Activated naive CD8-positive, alpha-beta T cell treated with anti-CD3 and anti-CD28 coated beads, Interleukin-2, amount 10 ng/mL, durations not matched to agents 7 days and 5 days (primary cell): ENCODE measurements at regions of chr9 and their contacts with region 1.

Region 1: DNA sequence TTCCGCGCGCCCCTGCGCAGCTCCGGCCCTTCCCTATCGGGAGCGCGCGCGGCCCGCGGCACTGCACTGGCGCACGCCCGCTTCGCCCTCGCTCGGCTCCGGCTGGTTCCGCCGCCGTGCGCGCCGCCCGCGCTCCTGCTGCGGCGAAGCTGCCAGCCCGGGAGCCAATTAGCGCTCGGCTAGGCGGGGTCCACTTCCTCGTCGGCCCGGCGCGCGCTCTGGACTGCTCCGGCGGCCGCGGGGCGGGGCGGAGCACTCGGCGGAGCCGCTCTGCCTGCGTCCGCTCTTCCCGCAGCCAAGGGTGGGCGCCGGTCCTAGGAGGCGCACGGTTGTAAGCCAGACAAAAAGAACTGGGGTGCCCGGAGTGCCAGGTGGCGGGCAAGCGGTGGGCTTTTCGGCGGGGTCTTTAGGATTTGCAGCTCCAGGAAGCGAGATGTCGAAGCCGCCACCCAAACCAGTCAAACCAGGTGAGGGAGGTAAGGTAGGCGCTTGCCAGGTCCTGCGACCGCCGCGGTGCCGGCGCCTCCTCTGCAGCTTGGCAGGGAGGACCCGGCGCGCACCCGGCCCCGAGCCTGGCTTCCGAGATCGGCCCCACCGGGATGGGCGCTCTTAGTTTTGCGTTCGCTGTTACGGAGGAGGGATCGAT is at the start of gene OSTF1:
- DNase-seq: peak; percentile 97
- ATAC-seq: peak; percentile 94
- H3K4me3 Mint-ChIP-seq: peak within 1 kb of the TSS; percentile 97
- H3K27ac Mint-ChIP-seq: peak within 1 kb of the TSS; percentile 94
- H3K4me1 Mint-ChIP-seq: peaks cover 50% of the 10 kb centered on the region
- H3K27me3 Mint-ChIP-seq: no peaks in the 10 kb centered on the region
- total RNA-seq, gene OSTF1: 99.9 to 108 TPM

Region 2: DNA sequence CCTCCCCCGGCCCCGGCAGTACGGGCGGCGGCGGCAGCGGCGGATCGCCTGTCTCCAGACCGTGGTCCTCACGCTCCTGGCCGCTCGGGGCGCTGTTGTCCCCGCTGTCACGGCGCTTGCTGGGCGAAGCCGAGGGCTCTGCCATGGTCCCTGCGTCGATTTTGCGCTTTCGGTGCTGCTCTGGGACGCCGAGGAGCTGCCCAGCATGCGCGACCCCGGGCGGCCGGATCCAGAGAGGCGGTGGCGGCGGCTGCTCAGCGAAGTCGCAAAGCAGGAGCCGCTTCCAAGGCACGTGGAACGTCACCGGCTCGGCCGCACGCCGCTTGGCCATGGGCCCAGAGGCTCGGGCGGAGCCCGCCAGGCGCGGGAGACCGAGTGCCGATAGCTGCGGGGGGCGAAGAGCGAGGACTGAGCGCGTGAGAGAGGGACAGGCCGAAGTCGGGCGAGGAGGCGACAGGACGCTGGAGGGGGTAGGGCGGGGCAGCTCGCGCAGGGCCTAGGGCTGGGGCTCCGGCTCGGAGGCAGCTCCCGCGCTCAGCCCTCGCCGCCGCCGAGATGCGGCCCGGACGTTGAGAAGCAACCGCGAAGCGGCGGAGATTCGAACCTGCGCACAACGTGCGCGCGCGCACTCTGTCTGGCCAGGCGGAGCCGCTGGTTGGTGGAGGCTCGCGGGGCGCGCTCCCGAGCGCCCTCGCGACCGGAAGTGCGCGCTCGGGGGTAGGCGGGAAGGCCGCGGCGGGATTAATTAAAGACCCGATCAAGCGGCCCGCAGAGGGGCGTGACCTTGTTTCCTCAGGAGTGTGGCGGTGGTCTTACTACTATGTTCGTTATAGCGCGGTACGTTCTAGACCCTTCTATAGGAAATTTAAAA is 135.9 kb before region 1 on chr9 and contains the start of gene C9orf40:
- POLR2A ChIA-PET with region 1: interaction called, 11 read pairs
- DNase-seq: peak; percentile 95
- ATAC-seq: peak; percentile 90
- H3K4me3 Mint-ChIP-seq: peak within 1 kb of the TSS; percentile 96
- H3K27ac Mint-ChIP-seq: peak within 1 kb of the TSS; percentile 94
- H3K4me1 Mint-ChIP-seq: peaks cover 23% of the 10 kb centered on the region
- H3K27me3 Mint-ChIP-seq: no peaks in the 10 kb centered on the region
- total RNA-seq, gene C9orf40: 17.9 to 18.0 TPM

Region 3: DNA sequence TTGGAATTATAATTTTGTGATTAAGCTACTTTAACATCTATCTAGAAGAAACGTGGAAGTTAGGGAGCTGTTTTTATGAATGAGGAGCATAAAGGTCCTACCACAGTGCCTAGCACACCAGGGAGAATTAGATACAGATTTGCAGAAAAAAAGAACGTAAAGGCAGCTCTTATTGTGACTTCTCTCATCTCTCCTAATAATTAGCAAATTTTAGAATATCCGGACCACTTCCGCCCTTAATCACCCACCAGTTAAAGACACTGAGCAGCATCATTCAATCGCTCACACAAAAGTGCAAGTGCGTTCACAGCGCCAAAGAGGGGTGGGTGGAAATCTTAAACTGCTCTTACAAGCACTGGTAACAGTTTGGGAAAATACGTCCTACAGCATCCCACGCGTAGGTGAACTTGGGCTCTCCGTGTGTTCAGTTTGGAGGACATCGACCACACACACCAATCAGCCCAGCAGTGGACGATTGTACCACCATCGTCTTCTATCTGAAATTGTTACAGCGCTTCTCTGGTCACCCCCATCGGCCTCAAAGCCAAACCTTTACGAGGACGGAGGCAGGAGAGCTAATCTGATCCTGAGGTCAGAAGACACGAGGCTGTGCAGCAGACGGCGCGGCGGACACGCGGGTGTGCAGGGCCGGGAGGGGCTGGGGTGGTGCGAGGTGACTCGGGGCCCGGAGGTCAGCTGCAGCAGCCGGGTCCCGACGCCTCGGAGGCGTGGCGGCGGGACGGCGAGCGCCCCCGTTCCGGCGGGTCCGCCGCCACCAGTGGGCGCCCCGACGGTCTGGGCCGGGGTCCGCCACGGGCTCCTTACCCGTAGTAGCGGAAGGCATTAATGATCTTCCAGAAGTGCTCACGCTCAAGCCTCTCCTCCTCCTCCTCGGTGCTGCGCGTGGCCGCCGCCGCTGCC is 60.9 kb before region 1 on chr9:
- POLR2A ChIA-PET with region 1: interaction called, 51 read pairs
- DNase-seq: no peak
- ATAC-seq: peak; percentile 23
- H3K4me3 Mint-ChIP-seq: peak overlapping the region; percentile 93
- H3K27ac Mint-ChIP-seq: peak overlapping the region; percentile 97
- H3K4me1 Mint-ChIP-seq: peaks cover 30% of the 10 kb centered on the region
- H3K27me3 Mint-ChIP-seq: no peaks in the 10 kb centered on the region

Region 4: GRCh38 chr9:75053869-75054268 is 34.5 kb before region 1 on chr9:
- POLR2A ChIA-PET with region 1: no interaction called
- DNase-seq: no peak
- ATAC-seq: no peak
- H3K4me3 Mint-ChIP-seq: no peak overlapping the region
- H3K27ac Mint-ChIP-seq: no peak overlapping the region
- H3K4me1 Mint-ChIP-seq: no peaks in the 10 kb centered on the region
- H3K27me3 Mint-ChIP-seq: peaks cover 2% of the 10 kb centered on the region

Region 5: GRCh38 chr9:75111019-75111622 is 22.7 kb after region 1 on chr9:
- POLR2A ChIA-PET with region 1: no interaction called
- DNase-seq: no peak
- ATAC-seq: no peak
- H3K4me3 Mint-ChIP-seq: no peak overlapping the region
- H3K27ac Mint-ChIP-seq: no peak overlapping the region
- H3K4me1 Mint-ChIP-seq: peaks cover 21% of the 10 kb centered on the region
- H3K27me3 Mint-ChIP-seq: no peaks in the 10 kb centered on the region

Region 6: DNA sequence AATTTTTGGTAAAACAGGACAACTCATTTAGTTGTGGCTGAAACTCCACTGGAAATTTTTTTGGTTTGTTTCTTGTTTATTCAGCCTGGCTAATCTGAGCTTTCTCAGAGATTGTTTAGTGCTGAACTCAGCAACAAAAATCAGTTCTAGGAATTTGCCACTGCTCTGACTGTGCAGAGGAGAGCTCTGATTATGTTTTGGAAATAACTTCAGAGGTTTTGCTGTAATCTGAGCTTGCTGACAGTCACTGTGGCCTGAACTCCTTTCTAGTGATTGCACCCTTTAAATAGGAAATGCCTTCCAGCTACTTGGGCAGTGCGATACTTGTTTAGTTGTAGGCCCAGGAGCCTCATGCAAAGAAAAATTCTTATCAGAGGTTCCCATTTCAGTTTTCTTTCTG is 60.2 kb after region 1 on chr9:
- POLR2A ChIA-PET with region 1: interaction called, 40 read pairs
- DNase-seq: no peak
- ATAC-seq: peak; percentile 49
- H3K4me3 Mint-ChIP-seq: peak overlapping the region; percentile 78
- H3K27ac Mint-ChIP-seq: peak overlapping the region; percentile 89
- H3K4me1 Mint-ChIP-seq: peaks cover 68% of the 10 kb centered on the region
- H3K27me3 Mint-ChIP-seq: no peaks in the 10 kb centered on the region

Region 7: DNA sequence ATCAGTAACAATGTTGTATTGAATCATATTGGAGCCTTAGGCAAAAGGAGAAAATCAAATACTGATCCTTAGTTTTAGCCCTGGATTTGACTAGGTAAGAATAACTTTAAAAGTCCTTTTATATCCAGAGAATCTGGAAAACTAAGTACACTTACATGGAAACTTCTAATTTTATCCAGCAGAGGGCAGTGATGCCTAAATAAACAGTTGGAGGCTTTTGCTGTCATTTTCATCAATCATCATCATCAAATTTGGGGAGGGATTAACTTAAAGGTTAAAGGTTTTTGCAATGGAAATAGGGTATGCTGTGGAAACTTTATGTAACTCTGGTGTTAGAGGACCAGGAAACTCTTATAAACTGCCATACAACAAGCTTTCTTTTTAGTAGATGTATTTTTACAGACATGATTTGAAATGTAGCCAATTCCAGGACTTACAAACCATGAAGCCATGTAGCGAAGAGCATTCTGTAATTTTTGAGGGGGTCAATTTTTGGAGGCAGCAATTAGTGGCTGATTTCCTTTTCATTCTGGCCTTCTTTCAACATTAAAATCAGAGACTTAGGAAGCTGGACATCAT is 112.6 kb after region 1 on chr9:
- POLR2A ChIA-PET with region 1: no interaction called
- DNase-seq: no peak
- ATAC-seq: no peak
- H3K4me3 Mint-ChIP-seq: no peak overlapping the region
- H3K27ac Mint-ChIP-seq: no peak overlapping the region
- H3K4me1 Mint-ChIP-seq: peaks cover 2% of the 10 kb centered on the region
- H3K27me3 Mint-ChIP-seq: peaks cover 2% of the 10 kb centered on the region